Heart left ventricle (tissue), 16 donors: ENCODE measurements at regions of chr1 and their contacts with region 1.

Region 1: GRCh38 chr1:28934676-28935075 is 20.3 kb downstream of the EPB41 start:
- DNase-seq: no peak
- ATAC-seq: no peak
- H3K4me3 ChIP-seq: no peak overlapping the region
- H3K27ac ChIP-seq: no peak overlapping the region
- H3K4me1 ChIP-seq: peaks cover 0 to 3% (median 0%) of the 10 kb centered on the region in 12 donors
- H3K27me3 ChIP-seq: no peaks in the 10 kb centered on the region
- CTCF ChIP-seq: no peak
- POLR2A ChIP-seq: no peak

Region 2: DNA sequence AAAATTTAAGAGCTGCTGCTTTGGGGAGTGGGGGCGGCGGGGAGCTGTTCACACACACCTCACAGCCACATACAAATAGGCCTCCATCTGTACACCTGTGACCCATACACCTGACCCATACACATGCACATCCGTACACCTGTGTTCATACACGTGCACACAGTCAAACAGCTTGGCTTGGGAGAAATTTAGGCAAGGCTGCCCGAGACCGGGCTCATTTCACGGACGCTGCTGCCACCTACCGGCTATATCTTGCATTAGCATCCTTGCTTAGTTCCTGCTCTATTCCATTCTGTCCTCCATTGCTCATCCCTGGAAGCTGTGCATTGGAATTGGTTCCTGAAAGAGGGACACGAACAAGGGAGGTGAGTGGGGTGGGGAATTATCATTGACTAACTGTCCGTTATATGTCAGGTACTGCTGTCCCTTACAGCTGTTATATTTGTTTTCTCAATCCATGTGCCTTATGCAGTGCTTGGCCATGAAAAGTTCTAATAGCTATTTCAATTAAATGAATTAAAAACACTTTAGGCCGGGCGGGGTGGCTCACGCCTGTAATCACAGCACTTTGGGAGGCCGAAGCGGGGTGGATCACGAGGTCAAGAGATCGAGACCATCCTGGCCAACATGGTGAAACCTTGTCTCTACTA is 57.4 kb before region 1 on chr1:
- intact Hi-C with region 1: no loop called
- DNase-seq: peak; percentile 60 to 82 (median 69)
- ATAC-seq: peak; percentile 49 to 86 (median 84)
- H3K4me3 ChIP-seq: no peak overlapping the region
- H3K27ac ChIP-seq: no peak overlapping the region
- H3K4me1 ChIP-seq: peaks cover 0 to 2% (median 0%) of the 10 kb centered on the region in 12 donors
- H3K27me3 ChIP-seq: peaks cover 0 to 7% (median 0%) of the 10 kb centered on the region in 9 donors
- CTCF ChIP-seq: peak; percentile 83 to 95 (median 92)
- POLR2A ChIP-seq: no peak

Region 3: GRCh38 chr1:28971980-28972771 is 37.5 kb after region 1 on chr1:
- intact Hi-C with region 1: loop called in 1 of 10 experiments (anchors 5 kb)
- DNase-seq: no peak
- ATAC-seq: no peak
- H3K4me3 ChIP-seq: no peak overlapping the region
- H3K27ac ChIP-seq: no peak overlapping the region
- H3K4me1 ChIP-seq: peaks cover 0 to 12% (median 0%) of the 10 kb centered on the region in 12 donors
- H3K27me3 ChIP-seq: no peaks in the 10 kb centered on the region
- CTCF ChIP-seq: no peak
- POLR2A ChIP-seq: no peak